ENCODE measurements at regions of chr16 and their contacts with region 1.

Region 1: GRCh38 chr16:85027349-85027957 is at the start of gene KIAA0513:
- DNase-seq: peak; percentile 96
- ATAC-seq: peak; percentile 81
- H3K4me3 Mint-ChIP-seq: peak within 1 kb of the TSS; percentile 86
- H3K27ac Mint-ChIP-seq: peak within 1 kb of the TSS; percentile 87
- H3K4me1 Mint-ChIP-seq: peaks cover 31% of the 10 kb centered on the region
- H3K27me3 Mint-ChIP-seq: no peaks in the 10 kb centered on the region
- total RNA-seq, gene KIAA0513: 7.9 to 9.6 TPM

Region 2: DNA sequence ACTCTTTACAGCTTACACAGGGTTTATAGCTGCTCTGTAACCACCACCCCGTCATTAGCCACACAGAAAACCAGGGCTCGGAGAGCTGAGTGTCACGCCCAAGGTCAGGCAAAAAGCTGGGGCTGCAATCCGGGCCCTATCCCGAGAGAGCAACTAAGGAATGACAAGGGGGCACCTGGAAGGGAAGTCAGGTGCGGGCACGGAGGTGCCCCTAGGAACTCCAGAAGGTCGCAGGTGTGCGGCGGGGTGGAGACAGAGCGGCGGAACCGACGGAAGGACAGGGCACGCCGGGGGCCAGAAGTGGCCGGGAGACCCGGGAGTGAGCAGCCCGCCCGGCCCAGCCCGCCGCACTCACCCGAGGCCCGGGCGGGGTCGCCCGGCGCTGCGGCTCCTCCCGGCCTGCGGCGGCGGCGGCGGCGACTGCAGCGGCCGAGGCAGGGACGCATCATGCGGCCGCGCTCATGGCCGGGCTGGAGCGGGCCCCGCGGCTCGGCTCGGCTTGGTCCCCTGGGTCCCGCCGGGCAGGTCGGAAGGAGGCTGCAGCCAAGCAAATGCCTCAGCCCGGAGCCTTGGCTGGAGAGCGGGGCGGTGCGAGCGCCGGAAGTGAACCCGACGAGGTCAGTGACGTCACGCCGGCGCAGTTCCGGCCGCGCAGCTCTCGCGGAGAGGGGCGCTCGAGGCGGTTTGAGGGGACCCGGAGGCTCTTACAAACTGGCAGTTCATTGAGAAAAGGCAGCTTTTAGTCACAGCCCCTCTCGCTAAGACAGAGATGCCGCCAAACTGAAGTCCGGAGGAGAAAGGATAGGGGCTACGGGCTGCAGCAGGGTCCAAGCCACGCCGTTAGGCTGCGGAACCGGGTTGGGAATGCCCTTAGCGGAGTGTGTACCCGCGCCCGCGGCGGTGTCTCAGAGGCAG is 16.3 kb before region 1 on chr16 and contains the start of gene ZDHHC7:
- CTCF ChIA-PET with region 1: interaction called, 34 read pairs
- DNase-seq: peak; percentile 88
- ATAC-seq: peak; percentile 95
- H3K4me3 Mint-ChIP-seq: peak within 1 kb of the TSS; percentile 91
- H3K27ac Mint-ChIP-seq: peak within 1 kb of the TSS; percentile 98
- H3K4me1 Mint-ChIP-seq: peaks cover 30% of the 10 kb centered on the region
- H3K27me3 Mint-ChIP-seq: peaks cover 5% of the 10 kb centered on the region
- total RNA-seq, gene ZDHHC7: 22.3 to 27.1 TPM

Region 3: DNA sequence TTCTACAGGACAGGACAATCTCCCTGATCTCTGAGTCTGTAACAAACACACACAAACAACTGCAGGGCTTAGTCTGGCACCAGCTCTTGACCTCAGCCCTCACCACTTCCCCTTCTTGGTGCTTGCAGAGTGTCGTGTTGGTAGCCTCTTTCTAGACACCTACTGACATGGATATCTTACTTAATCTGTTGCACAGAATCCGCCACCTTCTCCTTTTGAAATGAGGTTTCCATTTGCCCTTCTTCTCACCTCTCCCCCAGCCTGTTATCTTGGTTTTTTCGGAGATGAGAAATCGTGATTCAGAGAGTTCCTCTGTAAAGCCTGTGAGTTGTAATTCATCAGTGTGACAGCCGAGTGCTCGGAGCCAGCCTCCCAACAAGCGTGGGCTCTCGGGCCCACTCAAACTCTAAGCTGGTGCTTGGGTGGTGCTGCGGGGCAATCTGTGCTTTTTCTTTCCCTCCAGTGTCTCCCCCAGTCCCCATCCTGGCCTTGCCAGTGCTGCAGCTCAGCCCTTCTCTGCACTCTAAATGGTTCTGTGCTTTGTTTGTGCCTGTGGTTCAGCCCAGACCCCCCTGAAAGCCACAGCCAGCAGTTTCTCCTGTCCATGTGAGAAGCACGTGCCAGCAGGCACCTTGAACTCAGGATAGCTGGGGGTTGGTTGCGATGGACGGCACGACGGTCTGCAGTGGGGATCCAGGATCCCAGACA is 28.2 kb after region 1 on chr16:
- CTCF ChIA-PET with region 1: interaction called, 14 read pairs
- DNase-seq: peak; percentile 96
- ATAC-seq: peak; percentile 94
- H3K4me3 Mint-ChIP-seq: peak overlapping the region; percentile 57
- H3K27ac Mint-ChIP-seq: peak overlapping the region; percentile 91
- H3K4me1 Mint-ChIP-seq: peaks cover 33% of the 10 kb centered on the region
- H3K27me3 Mint-ChIP-seq: no peaks in the 10 kb centered on the region

Measured in activated CD8-positive, alpha-beta memory T cell treated with anti-CD3 and anti-CD28 coated beads, Interleukin-2, amount 10 ng/mL, durations not matched to agents 7 days and 5 days (primary cell).